WTC11 (cell line): ENCODE measurements at regions of chr22 and their contacts with region 1.

Region 1: GRCh38 chr22:19619144-19620009 is 94.9 kb upstream of the SEPTIN5 start:
- DNase-seq: no peak
- ATAC-seq: no peak
- H3K4me3 Mint-ChIP-seq: no peak overlapping the region
- H3K27ac Mint-ChIP-seq: no peak overlapping the region; the same call in 1 of the 2 replicates
- H3K4me1 Mint-ChIP-seq: peaks cover 71% of the 10 kb centered on the region
- H3K27me3 Mint-ChIP-seq: no peaks in the 10 kb centered on the region; the same call in 1 of the 2 replicates
- CTCF ChIP-seq: no peak

Region 2: DNA sequence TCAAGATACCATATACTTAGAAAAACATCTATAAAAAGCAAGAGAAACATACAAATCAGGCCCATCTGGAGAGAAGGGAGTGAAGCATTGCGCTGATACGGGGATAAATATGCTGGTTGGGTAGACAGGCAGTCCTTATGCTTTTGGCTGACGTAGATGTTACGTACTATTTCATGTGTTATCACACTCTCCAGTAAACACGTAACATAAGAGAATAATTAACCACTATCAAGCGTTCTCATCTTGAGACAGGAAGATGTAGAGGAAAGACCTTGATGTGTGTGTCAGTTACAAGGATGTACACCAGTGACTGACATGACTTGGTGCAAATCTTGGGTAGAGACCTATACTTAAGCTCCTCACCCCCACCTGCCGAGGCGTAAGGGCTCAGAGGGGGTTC is 596.6 kb before region 1 on chr22:
- CTCF ChIA-PET with region 1: no interaction called
- POLR2A ChIA-PET with region 1: interaction called, 13 read pairs
- DNase-seq: no peak
- ATAC-seq: no peak
- H3K4me3 Mint-ChIP-seq: no peak overlapping the region
- H3K27ac Mint-ChIP-seq: no peak overlapping the region
- H3K4me1 Mint-ChIP-seq: peaks cover 3% of the 10 kb centered on the region; the same call in 1 of the 2 replicates
- H3K27me3 Mint-ChIP-seq: peaks cover 10% of the 10 kb centered on the region
- CTCF ChIP-seq: no peak

Region 3: DNA sequence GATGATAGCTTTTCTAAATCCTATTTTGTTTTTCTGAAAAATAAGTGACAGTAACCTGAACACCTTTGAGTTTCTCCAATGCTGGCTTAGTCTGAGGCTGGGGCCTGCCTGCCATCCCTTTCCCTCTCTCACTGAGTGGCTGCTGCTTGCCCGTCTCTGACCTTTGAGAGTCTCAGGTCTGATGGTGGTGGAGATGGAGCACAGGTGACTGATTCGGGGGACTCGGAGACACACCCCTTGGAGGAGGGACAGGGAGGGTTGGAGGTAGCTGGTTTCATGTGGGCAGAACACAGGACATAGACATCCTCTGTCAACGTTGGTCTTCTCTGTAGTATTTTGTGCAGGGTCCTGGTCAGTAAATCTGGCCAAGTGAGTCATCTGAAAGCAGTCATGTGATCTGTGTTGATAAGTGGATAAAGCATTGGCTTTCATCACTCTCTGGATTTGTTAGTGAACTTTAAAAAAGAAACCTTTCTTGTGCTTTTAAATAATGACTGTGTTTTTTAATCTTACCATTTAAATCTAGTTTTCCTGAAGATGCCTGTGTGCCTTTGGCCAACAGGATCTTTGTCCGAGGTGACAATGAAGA is 48.1 kb before region 1 on chr22:
- CTCF ChIA-PET with region 1: no interaction called
- POLR2A ChIA-PET with region 1: no interaction called
- DNase-seq: no peak
- ATAC-seq: no peak
- H3K4me3 Mint-ChIP-seq: no peak overlapping the region
- H3K27ac Mint-ChIP-seq: no peak overlapping the region
- H3K4me1 Mint-ChIP-seq: peaks cover 7% of the 10 kb centered on the region
- H3K27me3 Mint-ChIP-seq: no peaks in the 10 kb centered on the region
- CTCF ChIP-seq: no peak